Vagina (tissue), 2 donors: ENCODE measurements at regions of chr6 and their contacts with region 1.

Region 1: GRCh38 chr6:43369174-43370022 is at the start of gene ZNF318:
- DNase-seq: peak in 1 of 2 donors; percentile 94
- H3K4me3 ChIP-seq: peak within 1 kb of the TSS; percentile 65 to 95
- H3K27ac ChIP-seq: peak within 1 kb of the TSS; percentile 86
- H3K4me1 ChIP-seq: peaks cover 34% of the 10 kb centered on the region
- H3K27me3 ChIP-seq: no peaks in the 10 kb centered on the region
- CTCF ChIP-seq: no peak
- POLR2A ChIP-seq: peak; percentile 12 to 18
- total RNA-seq, gene ZNF318: 17.2 TPM

Region 2: DNA sequence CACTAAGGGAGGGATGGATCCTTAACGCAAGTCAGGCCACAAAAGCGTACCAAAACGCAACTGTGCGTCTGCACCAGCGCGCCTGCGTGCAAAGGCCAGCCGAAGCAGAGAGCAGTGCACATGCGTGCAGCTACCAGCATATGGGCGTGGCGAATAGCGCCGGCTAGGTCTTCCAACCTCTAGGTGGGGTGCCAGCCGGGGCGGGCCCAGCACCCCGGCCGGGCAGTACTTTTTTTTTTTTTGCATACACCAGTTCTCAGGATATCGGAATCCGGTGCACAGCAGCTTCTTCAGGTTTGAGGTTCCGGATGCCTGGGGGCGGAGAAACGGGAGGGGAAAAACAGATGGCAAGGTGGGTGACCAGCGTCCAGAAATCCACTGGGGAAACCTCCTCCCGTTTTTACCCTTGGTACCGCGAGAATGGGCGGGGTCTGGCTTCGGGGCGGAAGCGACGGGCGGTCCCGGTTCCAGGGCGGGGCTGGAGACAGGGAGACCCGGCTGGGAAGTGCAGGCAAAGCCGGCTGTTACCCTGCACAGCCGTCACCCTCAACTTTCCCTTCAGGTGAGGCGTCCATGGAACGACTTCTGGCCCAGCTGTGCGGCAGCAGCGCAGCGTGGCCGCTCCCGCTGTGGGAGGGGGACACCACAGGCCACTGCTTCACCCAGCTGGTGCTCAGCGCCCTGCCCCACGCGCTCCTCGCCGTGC is 58.2 kb after region 1 on chr6 and contains the start of gene ABCC10:
- intact Hi-C with region 1: loop called (anchors 2 kb)
- DNase-seq: peak in 1 of 2 donors; percentile 96
- H3K4me3 ChIP-seq: peak within 1 kb of the TSS; percentile 55 to 82
- H3K27ac ChIP-seq: peak within 1 kb of the TSS; percentile 82
- H3K4me1 ChIP-seq: peaks cover 24% of the 10 kb centered on the region
- H3K27me3 ChIP-seq: no peaks in the 10 kb centered on the region
- CTCF ChIP-seq: peak in 2 of 3 experiments; percentile 21 to 47
- POLR2A ChIP-seq: peak in 1 of 2 donors; percentile 46
- total RNA-seq, gene ABCC10: 22.8 TPM